ENCODE measurements at regions of chrX and their contacts with region 1.

Region 1: DNA sequence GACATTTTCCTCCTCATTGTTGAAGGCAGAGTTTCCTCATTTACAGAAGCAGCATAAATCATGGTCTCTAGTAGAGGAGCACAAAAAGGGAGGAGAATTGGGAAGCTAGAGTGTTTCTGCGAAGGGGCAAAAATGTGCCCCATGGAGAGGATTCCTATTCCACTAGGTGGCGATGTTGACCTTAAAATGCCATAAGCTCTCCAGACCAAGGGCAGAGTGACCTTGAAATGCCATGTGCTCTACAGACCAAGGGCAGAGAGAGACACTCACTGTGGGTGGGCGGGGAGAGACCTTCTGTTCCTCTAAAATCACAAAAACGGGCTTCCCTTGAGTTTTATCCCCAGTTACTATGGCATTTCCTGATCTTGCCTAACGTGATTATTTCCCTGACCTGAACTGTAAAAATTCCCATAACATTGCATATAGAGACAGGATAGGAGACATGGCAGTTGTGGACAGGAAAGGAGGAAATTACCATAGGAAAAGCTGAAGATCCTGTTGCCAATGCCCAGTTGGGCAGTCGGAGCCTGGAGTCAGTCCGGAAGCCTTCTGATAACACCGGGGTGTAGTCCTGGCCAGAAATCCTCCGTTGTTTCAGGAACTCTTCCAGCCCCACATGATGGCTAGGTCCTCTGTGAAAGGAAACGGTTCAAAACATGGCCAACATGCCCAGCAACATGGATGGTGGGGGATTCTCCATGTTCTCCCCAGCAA is 567.7 kb downstream of the MAGEB5 start:
- DNase-seq: no peak
- ATAC-seq: no peak
- H3K4me3 ChIP-seq: no peak overlapping the region
- H3K27ac ChIP-seq: no peak overlapping the region
- H3K4me1 ChIP-seq: no peaks in the 10 kb centered on the region
- H3K27me3 ChIP-seq: no peaks in the 10 kb centered on the region

Region 2: DNA sequence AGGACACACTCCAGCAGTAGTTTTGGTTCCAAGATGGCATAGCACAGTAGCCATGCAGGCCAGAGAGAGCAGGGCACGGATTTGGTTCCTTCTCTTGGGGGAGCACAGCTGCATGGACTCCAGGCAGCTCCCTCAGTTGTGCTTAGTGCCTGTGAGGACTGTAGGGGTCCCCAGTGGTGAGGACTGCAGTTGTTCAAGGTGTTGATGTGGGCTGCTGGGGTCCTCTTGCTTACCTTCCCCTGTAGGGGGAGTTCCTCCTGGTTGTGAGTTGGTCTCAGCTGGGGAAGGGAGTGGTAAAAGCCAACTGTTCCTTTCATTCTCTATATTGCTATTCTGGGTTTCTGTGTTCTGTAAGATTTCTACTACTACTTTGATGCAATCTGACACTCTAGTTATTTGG is 38.8 kb after region 1 on chrX:
- intact Hi-C with region 1: no loop called
- DNase-seq: no peak
- ATAC-seq: no peak
- H3K4me3 ChIP-seq: no peak overlapping the region
- H3K27ac ChIP-seq: no peak overlapping the region
- H3K4me1 ChIP-seq: no peaks in the 10 kb centered on the region
- H3K27me3 ChIP-seq: no peaks in the 10 kb centered on the region

Region 3: GRCh38 chrX:26889574-26889973 is 105.9 kb after region 1 on chrX:
- intact Hi-C with region 1: no loop called
- DNase-seq: no peak
- ATAC-seq: no peak
- H3K4me3 ChIP-seq: no peak overlapping the region
- H3K27ac ChIP-seq: no peak overlapping the region
- H3K4me1 ChIP-seq: no peaks in the 10 kb centered on the region
- H3K27me3 ChIP-seq: no peaks in the 10 kb centered on the region

Region 4: GRCh38 chrX:26918633-26919032 is 135.0 kb after region 1 on chrX:
- intact Hi-C with region 1: loop called in 1 of 2 experiments (anchors 5 kb)
- DNase-seq: peak in 1 of 2 donors; percentile 46
- ATAC-seq: no peak
- H3K4me3 ChIP-seq: no peak overlapping the region
- H3K27ac ChIP-seq: no peak overlapping the region
- H3K4me1 ChIP-seq: no peaks in the 10 kb centered on the region
- H3K27me3 ChIP-seq: no peaks in the 10 kb centered on the region

Region 5: DNA sequence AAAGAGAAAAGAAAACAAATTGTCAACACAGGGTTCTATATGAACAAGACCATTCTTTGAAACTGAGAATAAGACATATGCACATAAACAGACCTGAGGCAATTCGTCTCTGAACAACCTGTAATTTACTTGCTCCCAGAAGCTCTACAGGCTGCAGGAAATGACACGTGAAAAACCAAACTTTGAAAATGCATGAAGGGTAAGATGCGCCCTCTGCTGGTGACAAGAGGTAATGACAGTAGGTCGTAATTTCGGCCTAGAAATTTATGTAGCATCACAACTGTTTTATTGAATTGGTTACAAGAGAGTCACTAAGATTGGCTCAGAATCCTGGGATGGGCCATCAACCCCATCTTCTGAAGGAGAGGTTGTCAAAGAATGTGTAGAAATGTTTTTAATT is 403.0 kb after region 1 on chrX:
- intact Hi-C with region 1: loop called (anchors 5 to 10 kb)
- DNase-seq: no peak
- ATAC-seq: no peak
- H3K4me3 ChIP-seq: no peak overlapping the region
- H3K27ac ChIP-seq: no peak overlapping the region
- H3K4me1 ChIP-seq: no peaks in the 10 kb centered on the region
- H3K27me3 ChIP-seq: no peaks in the 10 kb centered on the region

Measured in aorta (tissue), 5 donors.